ENCODE measurements at regions of chr11 and their contacts with region 1.

Region 1: DNA sequence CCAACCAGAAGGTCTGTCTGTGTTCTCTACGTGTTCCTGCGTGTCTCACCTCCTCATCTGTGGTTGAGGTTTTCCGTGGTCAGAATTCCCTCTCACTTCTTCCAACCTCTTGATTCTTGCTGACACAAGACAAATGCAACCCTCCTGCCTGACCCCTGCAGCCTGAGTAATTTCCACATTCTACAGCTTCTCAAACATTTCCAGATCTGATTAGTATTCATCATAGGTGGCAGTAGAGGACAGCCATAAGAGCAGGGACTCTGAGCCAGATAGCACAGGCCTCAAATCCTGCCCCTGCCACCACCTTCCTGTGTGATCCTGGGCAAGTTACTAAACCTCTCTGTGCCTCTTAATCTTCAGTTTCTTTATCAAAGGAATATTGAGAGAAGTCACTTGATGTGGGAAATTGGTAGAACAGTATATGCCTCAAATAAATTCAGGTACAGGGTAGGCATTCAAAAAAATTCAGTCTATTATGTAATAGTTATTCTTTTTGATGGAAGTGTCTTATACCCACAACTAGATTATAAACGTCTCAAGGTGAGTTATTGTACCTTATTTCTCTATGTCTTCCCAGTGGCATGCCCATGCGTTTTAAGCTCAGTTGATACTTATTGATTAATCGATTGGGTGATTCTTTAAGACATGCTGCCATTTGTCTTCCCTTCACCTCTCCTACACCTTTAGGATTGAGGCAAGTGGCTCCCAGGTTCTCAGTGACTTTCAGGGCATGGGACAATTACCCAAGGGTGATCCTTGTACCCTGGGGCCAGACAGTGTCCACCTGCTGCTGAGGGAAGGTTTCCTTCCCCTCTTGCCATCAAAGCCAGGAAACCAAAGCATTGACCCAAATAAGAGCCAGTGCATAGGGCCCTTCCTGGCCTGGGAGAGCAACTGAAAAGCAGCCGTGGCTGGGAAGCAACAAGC is 19.6 kb downstream of the POU2AF1 start:
- DNase-seq: peak; percentile 54
- H3K4me3 ChIP-seq: no peak overlapping the region
- H3K27ac ChIP-seq: no peak overlapping the region
- H3K4me1 ChIP-seq: no peaks in the 10 kb centered on the region
- H3K27me3 ChIP-seq: no peaks in the 10 kb centered on the region
- CTCF ChIP-seq: peak in 1 of 2 donors; percentile 19

Region 2: GRCh38 chr11:111206472-111206871 is 153.0 kb before region 1 on chr11:
- CTCF ChIA-PET with region 1: no interaction called
- dilution Hi-C with region 1: no loop called
- in situ Hi-C with region 1: no loop called
- intact Hi-C with region 1: no loop called
- DNase-seq: peak; percentile 9
- H3K4me3 ChIP-seq: no peak overlapping the region
- H3K27ac ChIP-seq: no peak overlapping the region
- H3K4me1 ChIP-seq: peaks cover 13% of the 10 kb centered on the region
- H3K27me3 ChIP-seq: no peaks in the 10 kb centered on the region
- CTCF ChIP-seq: no peak

Region 3: DNA sequence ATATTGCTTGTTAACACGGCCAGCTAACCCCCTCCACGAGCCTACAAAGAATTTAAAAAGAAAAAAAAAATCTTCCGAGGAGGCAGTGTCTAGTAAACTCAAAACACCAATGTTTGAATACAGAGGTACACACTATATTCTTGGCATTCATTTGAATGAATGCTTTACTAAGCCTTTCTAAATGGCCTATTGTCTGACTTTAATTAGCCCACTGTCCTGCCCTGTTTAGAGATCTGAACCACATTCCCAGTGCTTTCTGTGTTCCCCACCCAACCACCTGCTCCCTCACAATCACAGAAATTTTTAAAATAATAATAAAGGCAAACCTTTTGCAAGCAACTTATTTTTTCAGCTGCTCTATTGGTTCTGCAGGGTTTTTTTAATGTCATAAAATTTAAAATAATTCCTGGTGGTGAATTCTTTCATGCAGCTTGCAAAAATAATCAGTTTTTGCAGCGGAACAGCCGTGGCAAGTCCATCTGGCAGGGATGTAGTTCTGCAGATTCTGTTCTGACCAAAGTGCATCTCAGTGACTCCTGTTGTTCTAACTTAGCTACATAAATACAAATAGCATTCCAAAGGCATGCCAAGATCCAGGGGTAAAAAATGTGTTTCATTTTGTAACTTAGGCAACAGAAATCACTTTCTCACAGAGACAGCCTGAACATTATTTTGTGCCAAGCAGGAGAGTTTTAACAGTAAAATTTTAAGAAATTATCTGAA is 90.2 kb before region 1 on chr11:
- CTCF ChIA-PET with region 1: no interaction called
- dilution Hi-C with region 1: loop called (anchors 5 kb)
- in situ Hi-C with region 1: no loop called
- intact Hi-C with region 1: no loop called
- DNase-seq: no peak
- H3K4me3 ChIP-seq: no peak overlapping the region
- H3K27ac ChIP-seq: no peak overlapping the region
- H3K4me1 ChIP-seq: no peaks in the 10 kb centered on the region
- H3K27me3 ChIP-seq: peaks cover 7% of the 10 kb centered on the region
- CTCF ChIP-seq: no peak

Region 4: DNA sequence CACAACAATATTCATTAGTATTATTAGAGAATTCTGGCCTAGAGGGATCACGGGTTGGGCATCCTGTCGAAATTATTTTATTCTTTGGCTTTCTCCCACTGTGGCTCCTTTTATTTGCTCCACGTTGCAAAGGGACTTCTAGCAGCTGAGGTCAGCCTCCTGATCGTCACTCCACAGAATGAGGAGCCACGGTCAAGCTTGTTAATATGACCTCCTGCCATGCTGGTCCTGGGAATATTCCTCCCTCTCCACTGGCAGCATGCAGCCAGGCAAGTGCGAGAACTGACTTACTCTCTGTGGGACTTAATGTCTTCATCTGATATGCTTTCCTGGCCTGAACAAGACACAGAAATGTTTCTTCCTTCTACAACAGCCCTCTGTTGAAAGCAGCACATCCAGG is 40.2 kb before region 1 on chr11:
- CTCF ChIA-PET with region 1: no interaction called
- dilution Hi-C with region 1: loop called (anchors 5 kb)
- in situ Hi-C with region 1: no loop called
- intact Hi-C with region 1: no loop called
- DNase-seq: no peak
- H3K4me3 ChIP-seq: no peak overlapping the region
- H3K27ac ChIP-seq: no peak overlapping the region
- H3K4me1 ChIP-seq: no peaks in the 10 kb centered on the region
- H3K27me3 ChIP-seq: peaks cover 5% of the 10 kb centered on the region
- CTCF ChIP-seq: no peak